PC-9 (cell line): ENCODE measurements at regions of chr5 and their contacts with region 1.

Region 1: DNA sequence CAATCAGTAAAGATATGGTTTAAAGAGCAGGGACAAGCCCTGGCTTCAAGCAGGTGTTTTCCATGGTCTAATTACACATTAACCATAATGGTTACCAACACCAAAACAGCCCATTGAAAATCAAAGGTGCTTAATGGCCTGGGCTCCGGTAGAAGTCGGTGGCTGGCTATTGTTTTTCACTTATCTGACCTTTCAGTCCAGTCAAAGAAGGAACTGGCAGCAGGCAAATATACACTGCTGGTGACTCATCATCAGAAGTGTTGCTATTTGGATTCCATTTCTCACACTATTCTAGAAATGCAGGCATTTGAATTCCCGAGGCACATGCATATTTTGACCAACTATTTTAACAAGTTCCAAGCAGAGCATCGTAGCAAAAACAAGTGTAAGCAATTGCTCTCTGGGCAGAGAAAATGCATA is 26.3 kb upstream of the GABRP start:
- DNase-seq: peak; percentile 45 to 96
- H3K4me3 ChIP-seq: no peak overlapping the region
- H3K27ac ChIP-seq: peak overlapping the region; percentile 74
- H3K4me1 ChIP-seq: peaks cover 66% of the 10 kb centered on the region
- H3K27me3 ChIP-seq: no peaks in the 10 kb centered on the region
- CTCF ChIP-seq: no peak

Region 2: DNA sequence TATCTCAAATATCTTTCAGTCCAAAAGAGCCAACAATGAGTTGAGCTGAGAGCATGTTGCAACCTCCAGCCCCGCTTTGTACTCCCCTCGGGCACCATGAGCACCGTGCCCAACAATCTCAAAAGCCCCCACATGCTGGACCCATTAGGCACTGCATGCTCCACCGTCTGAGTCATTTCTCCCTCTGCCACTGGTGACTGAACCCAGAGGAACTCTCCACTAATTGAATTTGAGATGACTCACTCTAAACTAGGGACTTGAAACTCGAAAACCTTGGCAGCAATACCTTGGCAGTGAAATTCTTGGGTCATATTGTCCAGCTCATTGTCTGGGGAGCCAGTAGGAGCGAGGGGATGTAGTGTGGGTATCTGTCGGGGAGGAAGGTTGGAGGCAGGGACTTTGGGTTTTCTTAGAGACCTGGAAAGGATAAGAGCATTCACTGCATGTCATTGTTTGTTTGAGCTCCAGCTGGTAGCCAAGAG is 1406.4 kb before region 1 on chr5:
- CTCF ChIA-PET with region 1: no interaction called
- POLR2A ChIA-PET with region 1: no interaction called
- intact Hi-C with region 1: loop called (anchors 5 kb)
- DNase-seq: peak; percentile 86 to 98
- H3K4me3 ChIP-seq: no peak overlapping the region
- H3K27ac ChIP-seq: peak overlapping the region; percentile 98
- H3K4me1 ChIP-seq: peaks cover 66% of the 10 kb centered on the region
- H3K27me3 ChIP-seq: no peaks in the 10 kb centered on the region
- CTCF ChIP-seq: no peak

Region 3: GRCh38 chr5:170791325-170791954 is 34.2 kb after region 1 on chr5:
- CTCF ChIA-PET with region 1: interaction called, 3 read pairs
- POLR2A ChIA-PET with region 1: no interaction called
- intact Hi-C with region 1: loop called (anchors 2 kb)
- DNase-seq: peak; percentile 56 to 78
- H3K4me3 ChIP-seq: no peak overlapping the region
- H3K27ac ChIP-seq: no peak overlapping the region
- H3K4me1 ChIP-seq: 0 out of 2 replicates have a peak, but pooled peaks cover 3% of the 10 kb centered on the region
- H3K27me3 ChIP-seq: no peaks in the 10 kb centered on the region
- CTCF ChIP-seq: peak; percentile 91

Region 4: GRCh38 chr5:171092194-171092593 is 335.0 kb after region 1 on chr5:
- CTCF ChIA-PET with region 1: no interaction called
- POLR2A ChIA-PET with region 1: no interaction called
- intact Hi-C with region 1: loop called (anchors 5 kb)
- DNase-seq: peak in 1 of 2 experiments; percentile 74
- H3K4me3 ChIP-seq: no peak overlapping the region
- H3K27ac ChIP-seq: peak overlapping the region; percentile 36; the same call in 1 of the 2 replicates
- H3K4me1 ChIP-seq: peaks cover 11% of the 10 kb centered on the region
- H3K27me3 ChIP-seq: no peaks in the 10 kb centered on the region
- CTCF ChIP-seq: no peak

Region 5: GRCh38 chr5:171387345-171387969 is 630.3 kb after region 1 on chr5 and contains the start of gene NPM1:
- CTCF ChIA-PET with region 1: no interaction called
- POLR2A ChIA-PET with region 1: no interaction called
- intact Hi-C with region 1: loop called (anchors 5 kb)
- DNase-seq: peak; percentile 90 to 99
- H3K4me3 ChIP-seq: peak within 1 kb of the TSS; percentile 85
- H3K27ac ChIP-seq: peak within 1 kb of the TSS; percentile 92
- H3K4me1 ChIP-seq: peaks cover 32% of the 10 kb centered on the region
- H3K27me3 ChIP-seq: no peaks in the 10 kb centered on the region
- CTCF ChIP-seq: no peak
- total RNA-seq, gene NPM1: 2,285 and 2,364 TPM in 2 replicates